ENCODE measurements at regions of chr12 and their contacts with region 1.

Region 1: GRCh38 chr12:52050761-52051541 is at the start of gene NR4A1:
- DNase-seq: peak; percentile 98
- total RNA-seq, gene NR4A1: 76.3 TPM

Region 2: GRCh38 chr12:52032804-52033502 is 18.0 kb before region 1 on chr12:
- intact Hi-C with region 1: loop called (anchors 2 kb)
- DNase-seq: peak; percentile 100

Region 3: DNA sequence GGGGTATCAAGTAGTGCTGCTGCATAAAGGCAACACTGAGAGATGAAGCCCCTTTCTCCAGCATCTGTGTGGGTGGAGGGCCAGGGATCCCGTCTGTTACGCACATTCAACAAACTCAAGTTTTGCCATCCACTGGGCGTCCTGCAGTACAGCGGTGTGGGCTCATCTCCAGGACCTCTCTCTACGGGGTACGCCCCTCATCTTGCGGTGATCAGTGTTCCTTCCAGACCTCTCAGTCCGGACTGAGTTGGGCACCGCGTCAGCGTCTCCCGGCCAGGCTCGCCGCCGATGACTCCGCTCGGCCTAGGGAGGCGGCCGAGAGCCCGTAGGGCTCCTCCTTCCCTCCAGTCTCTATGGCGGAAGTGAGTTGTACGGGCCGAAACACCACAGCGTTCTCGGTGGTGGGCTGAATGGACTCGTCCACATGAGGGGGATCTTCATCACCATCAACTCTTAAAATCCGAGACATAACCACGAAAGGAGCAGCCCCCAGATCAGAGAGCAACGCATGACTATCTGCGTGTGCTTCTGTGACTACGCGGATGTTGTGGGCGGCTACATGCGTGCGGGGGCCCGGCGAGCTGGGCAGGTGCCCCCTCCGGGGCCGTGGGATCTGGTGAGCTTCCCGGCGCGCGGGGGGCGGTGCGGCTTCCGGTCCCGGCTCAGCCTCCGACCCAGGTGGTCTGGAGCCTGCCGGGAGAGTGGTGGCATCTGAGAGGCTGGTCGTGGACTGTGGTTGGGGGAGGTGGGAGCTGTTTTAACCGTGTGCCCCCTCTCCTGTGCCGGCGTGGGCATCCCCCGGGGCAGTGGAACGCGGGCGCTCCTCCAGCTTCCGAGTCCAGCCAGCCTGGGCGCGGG is 18.6 kb after region 1 on chr12 and contains the start of gene ATG101:
- intact Hi-C with region 1: loop called (anchors 1 kb)
- DNase-seq: peak; percentile 95
- total RNA-seq, gene ATG101: 23.2 TPM

Measured in cardiac septum (tissue), 1 donor.